K562 (cell line): ENCODE measurements at regions of chr1 and their contacts with region 1.

Region 1: DNA sequence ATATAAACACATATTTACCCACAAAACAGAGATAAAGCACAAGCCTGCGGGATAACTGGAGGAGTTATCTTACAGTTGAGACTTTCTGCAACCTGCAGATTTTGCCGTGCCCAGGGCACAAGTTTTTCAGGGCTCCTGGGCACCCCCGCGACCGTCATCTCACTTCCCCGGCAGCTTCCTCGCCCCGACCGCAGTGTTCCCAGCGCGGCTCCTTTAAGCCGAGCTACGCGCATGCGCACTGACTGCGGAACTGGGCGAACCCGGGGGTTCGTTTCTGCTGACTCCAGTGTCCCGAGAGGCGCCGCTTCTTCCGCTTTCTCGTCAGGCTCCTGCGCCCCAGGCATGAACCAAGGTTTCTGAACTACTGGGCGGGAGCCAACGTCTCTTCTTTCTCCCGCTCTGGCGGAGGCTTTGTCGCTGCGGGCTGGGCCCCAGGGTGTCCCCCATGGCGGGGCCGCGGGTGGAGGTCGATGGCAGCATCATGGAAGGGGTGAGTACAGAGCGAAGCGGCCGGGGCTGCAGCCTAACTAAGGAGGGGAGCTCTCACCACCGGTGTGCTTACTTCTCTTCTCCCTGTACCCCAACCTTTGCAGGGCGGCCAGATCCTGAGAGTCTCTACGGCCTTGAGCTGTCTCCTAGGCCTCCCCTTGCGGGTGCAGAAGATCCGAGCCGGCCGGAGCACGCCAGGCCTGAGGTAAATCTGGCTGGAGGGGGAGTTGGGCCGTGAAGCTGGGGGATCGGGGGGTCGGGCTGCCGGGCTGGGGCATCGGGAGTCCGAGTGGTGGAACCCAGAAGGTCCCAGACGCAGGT is at the start of gene RTCA:
- DNase-seq: peak; percentile 94 to 98 (median 96)
- ATAC-seq: peak; percentile 98
- H3K4me3 ChIP-seq: peak within 1 kb of the TSS; percentile 88
- H3K27ac ChIP-seq: peak within 1 kb of the TSS; percentile 87
- H3K4me1 ChIP-seq: peaks cover 4 to 6% of the 10 kb centered on the region in 2 experiments; a peak in 3 of 5 replicates
- H3K27me3 ChIP-seq: no peaks in the 10 kb centered on the region; a peak in 1 of 5 replicates
- CTCF ChIP-seq: 0 out of 6 replicates have a peak, but pooled peaks of 1 of the 3 experiments have one; percentile 2
- EP300 ChIP-seq: no peak
- POLR2A ChIP-seq: peak; percentile 89
- RAD21 ChIP-seq: no peak
- polyA plus RNA-seq, gene RTCA: 11.6 to 13.1 TPM

Region 2: GRCh38 chr1:100045206-100045605 is 220.9 kb before region 1 on chr1:
- CTCF ChIA-PET with region 1: no interaction called
- POLR2A ChIA-PET with region 1: no interaction called
- in situ Hi-C with region 1: no loop called
- intact Hi-C with region 1: loop called (anchors 10 kb)
- DNase-seq: no peak
- ATAC-seq: no peak
- H3K4me3 ChIP-seq: no peak overlapping the region
- H3K27ac ChIP-seq: no peak overlapping the region; the same call in 2 of the 3 replicates
- H3K4me1 ChIP-seq: peaks cover 9 to 23% of the 10 kb centered on the region in 2 experiments
- H3K27me3 ChIP-seq: no peaks in the 10 kb centered on the region
- CTCF ChIP-seq: no peak
- EP300 ChIP-seq: no peak
- POLR2A ChIP-seq: no peak
- RAD21 ChIP-seq: no peak

Region 3: GRCh38 chr1:100132566-100133477 is 133.3 kb before region 1 on chr1 and contains the starts of genes SASS6 and TRMT13:
- CTCF ChIA-PET with region 1: no interaction called
- POLR2A ChIA-PET with region 1: interaction called, 3 read pairs
- in situ Hi-C with region 1: no loop called
- intact Hi-C with region 1: loop called (anchors 5 kb)
- DNase-seq: peak; percentile 85 to 99 (median 88)
- ATAC-seq: peak; percentile 90
- H3K4me3 ChIP-seq: peak within 1 kb of the TSS; percentile 51
- H3K27ac ChIP-seq: peak within 1 kb of the TSS; percentile 79
- H3K4me1 ChIP-seq: peaks cover 3 to 10% of the 10 kb centered on the region in 2 experiments; a peak in 2 of 5 replicates
- H3K27me3 ChIP-seq: no peaks in the 10 kb centered on the region
- CTCF ChIP-seq: no peak
- EP300 ChIP-seq: peak; percentile 79
- POLR2A ChIP-seq: peak; percentile 84
- RAD21 ChIP-seq: no peak; a peak in 1 of 4 replicates
- polyA plus RNA-seq, gene SASS6: 14.7 to 16.4 TPM
- polyA plus RNA-seq, gene TRMT13: 24.2 to 24.3 TPM

Region 4: GRCh38 chr1:100249537-100250257 is 16.4 kb before region 1 on chr1 and contains the start of gene DBT:
- CTCF ChIA-PET with region 1: no interaction called
- POLR2A ChIA-PET with region 1: interaction called, 17 read pairs
- in situ Hi-C with region 1: no loop called
- intact Hi-C with region 1: loop called (anchors 2 kb)
- DNase-seq: peak; percentile 98 to 100 (median 100)
- ATAC-seq: peak; percentile 98
- H3K4me3 ChIP-seq: peak within 1 kb of the TSS; percentile 68
- H3K27ac ChIP-seq: peak within 1 kb of the TSS; percentile 83
- H3K4me1 ChIP-seq: peaks cover 4 to 21% of the 10 kb centered on the region in 2 experiments; a peak in 4 of 5 replicates
- H3K27me3 ChIP-seq: no peaks in the 10 kb centered on the region
- CTCF ChIP-seq: no peak
- EP300 ChIP-seq: peak; percentile 49
- POLR2A ChIP-seq: peak; percentile 98
- RAD21 ChIP-seq: 0 out of 4 replicates have a peak, but pooled peaks of 1 of the 2 experiments have one; percentile 7
- polyA plus RNA-seq, gene DBT: 2.7 to 3.3 TPM

Region 5: DNA sequence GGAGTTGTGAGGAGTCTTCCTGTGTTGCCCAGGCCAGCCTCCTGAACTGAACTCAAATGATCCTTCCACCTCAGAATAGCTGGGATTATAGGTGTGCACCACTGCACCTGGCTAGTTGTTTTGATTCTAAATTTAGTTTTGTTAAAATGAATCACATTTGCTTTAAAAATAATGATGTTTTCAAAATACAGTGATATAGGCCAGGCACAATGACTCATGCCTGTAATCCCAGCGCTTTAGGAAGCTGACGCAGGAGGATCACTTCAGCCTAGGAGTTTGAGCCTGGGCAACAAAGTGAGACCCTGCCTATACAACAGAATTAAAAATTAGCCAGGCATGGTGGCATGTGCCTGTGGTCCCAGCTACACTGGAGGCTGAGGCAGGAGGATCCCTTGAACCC is 24.2 kb after region 1 on chr1:
- CTCF ChIA-PET with region 1: no interaction called
- POLR2A ChIA-PET with region 1: interaction called, 10 read pairs
- in situ Hi-C with region 1: no loop called
- intact Hi-C with region 1: no loop called
- DNase-seq: no peak
- ATAC-seq: no peak
- H3K4me3 ChIP-seq: no peak overlapping the region
- H3K27ac ChIP-seq: no peak overlapping the region
- H3K4me1 ChIP-seq: no peaks in the 10 kb centered on the region; a peak in 1 of 5 replicates
- H3K27me3 ChIP-seq: no peaks in the 10 kb centered on the region
- CTCF ChIP-seq: no peak
- EP300 ChIP-seq: no peak
- POLR2A ChIP-seq: no peak
- RAD21 ChIP-seq: no peak

Region 6: DNA sequence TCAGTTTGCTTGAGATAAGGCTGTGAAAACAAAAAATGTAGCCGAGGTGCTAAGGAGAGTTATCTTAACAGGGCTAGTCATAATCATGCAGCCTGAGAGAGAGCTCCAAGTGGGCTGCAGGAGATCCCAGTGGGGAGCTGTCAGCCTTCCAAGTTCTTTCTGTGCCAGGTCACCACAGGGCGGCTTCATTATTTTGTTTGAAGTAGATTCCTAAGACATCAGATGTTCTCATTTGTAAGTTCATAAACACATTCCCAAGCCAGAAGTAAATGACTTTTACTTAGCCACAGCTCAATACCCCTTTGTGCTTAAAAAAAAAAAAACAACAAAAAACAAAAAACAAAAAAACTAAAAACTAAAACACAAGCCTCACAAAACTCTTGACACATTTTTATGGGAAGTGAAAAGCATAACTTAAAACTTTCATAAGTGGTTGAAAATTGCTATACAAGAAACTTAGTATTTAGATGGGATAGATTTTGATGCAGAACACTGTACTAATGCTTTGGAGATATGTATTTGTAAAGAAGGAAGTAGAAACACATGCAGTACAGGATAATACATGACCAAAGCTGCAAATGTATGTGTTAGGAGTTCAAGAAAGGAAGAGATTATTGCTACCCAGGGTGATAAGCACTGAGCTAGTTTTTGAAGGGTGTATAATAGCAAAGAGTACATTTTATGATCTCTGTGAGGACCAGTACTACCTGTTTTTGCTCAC is 94.8 kb after region 1 on chr1:
- CTCF ChIA-PET with region 1: interaction called, 5 read pairs
- POLR2A ChIA-PET with region 1: interaction called, 15 read pairs
- in situ Hi-C with region 1: no loop called
- intact Hi-C with region 1: no loop called
- DNase-seq: peak in 2 of 4 experiments; percentile 42 to 66
- ATAC-seq: peak; percentile 1; the same call in 1 of the 3 replicates
- H3K4me3 ChIP-seq: no peak overlapping the region
- H3K27ac ChIP-seq: peak overlapping the region; percentile 61
- H3K4me1 ChIP-seq: peaks cover 8 to 41% of the 10 kb centered on the region in 2 experiments
- H3K27me3 ChIP-seq: no peaks in the 10 kb centered on the region
- CTCF ChIP-seq: no peak
- EP300 ChIP-seq: no peak
- POLR2A ChIP-seq: no peak
- RAD21 ChIP-seq: no peak